PC-9 (cell line): ENCODE measurements at regions of chrX and their contacts with region 1.

Region 1: GRCh38 chrX:150683536-150684146 is 9.6 kb upstream of the MTMR1 start:
- DNase-seq: peak; percentile 21 to 51
- H3K4me3 ChIP-seq: no peak overlapping the region
- H3K27ac ChIP-seq: no peak overlapping the region
- H3K4me1 ChIP-seq: peaks cover 17% of the 10 kb centered on the region
- H3K27me3 ChIP-seq: no peaks in the 10 kb centered on the region
- CTCF ChIP-seq: peak; percentile 95

Region 2: GRCh38 chrX:149950681-149951080 is 733.0 kb before region 1 on chrX:
- CTCF ChIA-PET with region 1: no interaction called
- POLR2A ChIA-PET with region 1: no interaction called
- intact Hi-C with region 1: loop called (anchors 1 kb)
- DNase-seq: no peak
- H3K4me3 ChIP-seq: no peak overlapping the region
- H3K27ac ChIP-seq: no peak overlapping the region
- H3K4me1 ChIP-seq: no peaks in the 10 kb centered on the region
- H3K27me3 ChIP-seq: no peaks in the 10 kb centered on the region
- CTCF ChIP-seq: peak; percentile 84

Region 3: DNA sequence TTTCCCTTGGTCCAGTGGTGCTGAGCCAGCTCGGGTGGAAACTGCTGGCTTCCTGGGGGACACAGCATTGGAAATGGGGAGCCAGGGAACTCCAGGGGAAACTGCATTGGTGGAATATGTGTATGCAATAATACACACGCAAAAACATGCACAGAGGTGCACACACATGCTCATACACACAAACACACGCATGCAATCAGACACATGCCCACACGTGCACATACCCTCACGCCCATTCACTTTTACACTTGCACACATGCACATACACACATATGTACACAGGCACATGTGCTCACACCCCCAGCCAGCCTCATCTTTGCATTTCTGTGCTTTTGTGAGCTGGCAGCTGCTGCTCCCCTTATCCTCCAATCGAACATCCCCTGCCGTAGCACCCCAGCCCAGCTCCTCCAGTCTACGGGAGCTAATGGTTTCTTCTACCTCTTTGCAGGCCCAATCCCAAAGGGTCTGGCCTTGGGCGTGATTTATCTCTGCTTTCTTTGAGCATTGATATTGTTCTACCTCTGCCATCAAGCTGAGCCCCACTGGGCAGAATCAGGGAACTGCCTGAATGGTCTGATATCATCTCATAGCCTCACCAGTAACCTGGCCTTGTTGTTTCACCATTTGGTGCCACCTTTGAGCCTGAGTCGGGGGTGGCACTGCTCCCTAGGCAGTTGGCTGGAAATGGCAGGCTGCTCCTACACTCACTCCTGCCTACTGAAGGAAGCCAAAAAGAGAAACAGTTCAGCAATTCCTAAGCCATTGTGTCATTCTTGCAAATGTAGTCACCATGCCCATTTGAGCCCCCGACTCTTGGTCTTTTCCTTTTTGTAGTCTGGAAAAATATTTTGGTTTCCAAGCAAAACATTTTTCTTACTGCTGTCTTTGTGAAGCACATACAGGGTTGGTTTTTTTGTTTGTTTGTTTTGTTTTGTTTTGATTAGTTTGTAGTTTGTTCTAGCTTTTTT is 424.9 kb before region 1 on chrX:
- CTCF ChIA-PET with region 1: no interaction called
- POLR2A ChIA-PET with region 1: no interaction called
- intact Hi-C with region 1: no loop called
- DNase-seq: peak in 1 of 2 experiments; percentile 10
- H3K4me3 ChIP-seq: no peak overlapping the region
- H3K27ac ChIP-seq: no peak overlapping the region
- H3K4me1 ChIP-seq: no peaks in the 10 kb centered on the region
- H3K27me3 ChIP-seq: no peaks in the 10 kb centered on the region
- CTCF ChIP-seq: no peak